Dendritic cell treated with granulocyte-macrophage colony-stimulating factor and Interleukin-4, amounts not matched to agents 40 ng/mL and 50 ng/mL, for 4 days (primary cell): ENCODE measurements at regions of chr17 and their contacts with region 1.

Region 1: DNA sequence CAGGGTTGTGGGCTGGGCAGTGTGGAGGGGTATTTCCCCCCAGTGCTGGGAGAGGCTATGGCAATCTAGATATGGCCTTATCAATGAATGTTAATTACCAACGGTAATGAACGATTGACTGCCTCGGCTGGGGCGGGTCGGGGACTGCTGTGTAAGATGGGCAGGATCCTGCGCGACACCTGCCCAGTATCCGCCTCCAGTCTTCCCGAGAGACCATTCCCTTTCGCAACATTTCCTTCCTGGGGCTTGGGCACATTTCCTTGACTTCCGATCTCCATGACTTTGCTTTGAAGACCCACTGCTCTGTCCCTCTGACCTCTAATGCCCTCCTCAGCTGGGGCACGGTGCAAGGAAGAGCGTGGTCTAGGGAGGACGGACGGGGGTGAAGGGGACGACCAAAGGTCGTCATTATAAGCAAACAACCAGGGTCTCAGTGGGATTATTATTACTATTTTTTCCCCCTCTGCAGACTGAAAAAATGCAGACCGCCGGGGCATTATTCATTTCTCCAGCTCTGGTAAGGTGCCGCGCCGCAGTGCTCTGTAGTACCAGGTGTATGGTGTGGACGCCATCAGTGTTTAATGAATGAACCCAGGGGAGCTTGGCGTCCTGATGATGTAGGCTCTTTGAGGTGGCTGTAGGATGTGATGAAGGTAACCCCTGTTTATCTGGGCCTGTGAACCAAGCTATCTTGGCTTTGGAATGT is 506 bp downstream of the ATP5MC1 start:
- H3K4me3 Mint-ChIP-seq: peak overlapping the region; percentile 97
- H3K27ac Mint-ChIP-seq: peak overlapping the region; percentile 92
- H3K4me1 Mint-ChIP-seq: peaks cover 18% of the 10 kb centered on the region
- H3K27me3 Mint-ChIP-seq: no peaks in the 10 kb centered on the region

Region 2: GRCh38 chr17:48830840-48831548 is 62.1 kb before region 1 on chr17 and contains the start of gene CALCOCO2:
- intact Hi-C with region 1: loop called (anchors 2 kb)
- H3K4me3 Mint-ChIP-seq: peak within 1 kb of the TSS; percentile 97
- H3K27ac Mint-ChIP-seq: peak within 1 kb of the TSS; percentile 99
- H3K4me1 Mint-ChIP-seq: peaks cover 36% of the 10 kb centered on the region
- H3K27me3 Mint-ChIP-seq: peaks cover 36% of the 10 kb centered on the region

Region 3: GRCh38 chr17:48908047-48908843 is 15.2 kb after region 1 on chr17 and contains the start of gene UBE2Z:
- intact Hi-C with region 1: loop called (anchors 1 kb)
- H3K4me3 Mint-ChIP-seq: peak within 1 kb of the TSS; percentile 92
- H3K27ac Mint-ChIP-seq: peak within 1 kb of the TSS; percentile 95
- H3K4me1 Mint-ChIP-seq: peaks cover 58% of the 10 kb centered on the region
- H3K27me3 Mint-ChIP-seq: no peaks in the 10 kb centered on the region

Region 4: GRCh38 chr17:48915459-48916282 is 22.6 kb after region 1 on chr17:
- intact Hi-C with region 1: loop called (anchors 1 kb)
- H3K4me3 Mint-ChIP-seq: peak overlapping the region; percentile 79
- H3K27ac Mint-ChIP-seq: peak overlapping the region; percentile 95
- H3K4me1 Mint-ChIP-seq: peaks cover 72% of the 10 kb centered on the region
- H3K27me3 Mint-ChIP-seq: no peaks in the 10 kb centered on the region

Region 5: GRCh38 chr17:48944519-48945260 is 51.6 kb after region 1 on chr17 and contains the start of gene SNF8:
- intact Hi-C with region 1: loop called (anchors 1 kb)
- H3K4me3 Mint-ChIP-seq: peak within 1 kb of the TSS; percentile 98
- H3K27ac Mint-ChIP-seq: peak within 1 kb of the TSS; percentile 92
- H3K4me1 Mint-ChIP-seq: peaks cover 19% of the 10 kb centered on the region
- H3K27me3 Mint-ChIP-seq: peaks cover 17% of the 10 kb centered on the region